Heart left ventricle (tissue), 16 donors: ENCODE measurements at regions of chr6 and their contacts with region 1.

Region 1: DNA sequence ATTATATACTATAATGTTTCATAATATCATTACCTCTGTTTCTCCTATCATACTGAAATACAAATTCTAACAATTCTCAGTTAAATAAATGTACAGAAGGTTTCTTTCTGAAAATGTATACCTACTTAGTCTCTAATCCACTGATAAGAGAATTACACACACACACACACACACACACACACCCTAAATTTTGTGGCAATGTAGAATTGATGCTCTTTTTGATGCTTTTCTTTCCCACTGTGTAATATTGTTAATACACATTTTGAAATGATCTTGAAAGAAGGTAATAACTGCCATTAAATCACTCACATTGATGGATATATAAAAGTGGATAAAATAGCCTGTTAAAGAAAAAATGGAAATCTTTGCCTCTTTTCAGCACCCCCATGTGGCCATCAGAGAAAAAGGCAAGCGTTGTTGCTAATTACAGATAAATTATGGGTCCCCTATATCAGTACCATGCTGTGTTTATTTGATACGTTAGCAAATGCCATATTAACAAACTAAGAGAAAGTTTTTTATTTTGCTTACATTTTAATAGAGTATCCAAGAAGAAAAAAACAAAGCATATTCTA is 76.6 kb upstream of the VGLL2 start:
- DNase-seq: no peak
- ATAC-seq: no peak
- H3K4me3 ChIP-seq: no peak overlapping the region
- H3K27ac ChIP-seq: no peak overlapping the region
- H3K4me1 ChIP-seq: no peaks in the 10 kb centered on the region
- H3K27me3 ChIP-seq: no peaks in the 10 kb centered on the region
- CTCF ChIP-seq: peak; percentile 15 to 55 (median 38)
- POLR2A ChIP-seq: no peak

Region 2: GRCh38 chr6:116975600-116975999 is 213.1 kb before region 1 on chr6:
- intact Hi-C with region 1: loop called in 9 of 10 experiments (anchors 2 to 10 kb)
- DNase-seq: no peak
- ATAC-seq: no peak
- H3K4me3 ChIP-seq: no peak overlapping the region
- H3K27ac ChIP-seq: no peak overlapping the region
- H3K4me1 ChIP-seq: no peaks in the 10 kb centered on the region
- H3K27me3 ChIP-seq: no peaks in the 10 kb centered on the region
- CTCF ChIP-seq: no peak
- POLR2A ChIP-seq: no peak

Region 3: DNA sequence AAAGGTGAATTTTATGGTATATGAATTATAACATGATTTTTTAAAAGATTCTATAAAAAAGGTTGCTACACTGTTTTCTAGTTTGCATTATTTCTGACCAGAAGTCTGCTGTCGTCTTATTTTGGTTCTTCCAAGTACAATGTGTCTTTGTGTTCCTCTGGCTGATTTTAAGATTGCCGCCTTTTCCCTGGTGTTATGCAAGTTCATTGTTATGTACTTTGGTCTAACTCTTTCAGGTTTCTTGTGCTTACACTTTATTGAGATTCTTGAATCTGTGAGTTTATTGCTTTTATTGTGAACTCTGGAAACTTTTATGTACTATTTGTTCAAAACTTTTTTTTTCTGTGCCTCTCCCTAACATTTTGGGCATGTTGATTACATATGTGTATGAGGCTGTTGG is 201.9 kb before region 1 on chr6:
- intact Hi-C with region 1: loop called in 1 of 10 experiments (anchors 5 kb)
- DNase-seq: no peak
- ATAC-seq: no peak
- H3K4me3 ChIP-seq: no peak overlapping the region
- H3K27ac ChIP-seq: no peak overlapping the region
- H3K4me1 ChIP-seq: no peaks in the 10 kb centered on the region
- H3K27me3 ChIP-seq: no peaks in the 10 kb centered on the region
- CTCF ChIP-seq: no peak
- POLR2A ChIP-seq: no peak